Activated CD4-positive, alpha-beta T cell treated with anti-CD3 and anti-CD28 coated beads, Interleukin-2, amount 10 ng/mL, durations not matched to agents 24 days and 14 days (primary cell): ENCODE measurements at regions of chr4 and their contacts with region 1.

Region 1: GRCh38 chr4:165327211-165328100 is at the start of gene MSMO1:
- DNase-seq: peak; percentile 100
- H3K4me3 Mint-ChIP-seq: no peak within 1 kb of the TSS
- H3K27ac Mint-ChIP-seq: peak within 1 kb of the TSS; percentile 73
- H3K4me1 Mint-ChIP-seq: peaks cover 38% of the 10 kb centered on the region
- H3K27me3 Mint-ChIP-seq: no peaks in the 10 kb centered on the region
- total RNA-seq, gene MSMO1: 82.0 and 82.3 TPM in 2 replicates

Region 2: GRCh38 chr4:165288639-165289422 is 38.6 kb before region 1 on chr4:
- intact Hi-C with region 1: loop called (anchors 10 kb)
- DNase-seq: no peak
- H3K4me3 Mint-ChIP-seq: peak overlapping the region; percentile 6
- H3K27ac Mint-ChIP-seq: peak overlapping the region; percentile 65
- H3K4me1 Mint-ChIP-seq: peaks cover 39% of the 10 kb centered on the region
- H3K27me3 Mint-ChIP-seq: no peaks in the 10 kb centered on the region

Region 3: GRCh38 chr4:165301833-165302232 is 25.6 kb before region 1 on chr4:
- intact Hi-C with region 1: loop called (anchors 1 kb)
- DNase-seq: peak; percentile 79
- H3K4me3 Mint-ChIP-seq: peak overlapping the region; percentile 75
- H3K27ac Mint-ChIP-seq: peak overlapping the region; percentile 74
- H3K4me1 Mint-ChIP-seq: peaks cover 23% of the 10 kb centered on the region
- H3K27me3 Mint-ChIP-seq: no peaks in the 10 kb centered on the region

Region 4: GRCh38 chr4:165415910-165416309 is 88.5 kb after region 1 on chr4:
- intact Hi-C with region 1: no loop called
- DNase-seq: no peak
- H3K4me3 Mint-ChIP-seq: no peak overlapping the region
- H3K27ac Mint-ChIP-seq: no peak overlapping the region
- H3K4me1 Mint-ChIP-seq: no peaks in the 10 kb centered on the region
- H3K27me3 Mint-ChIP-seq: peaks cover 23% of the 10 kb centered on the region